Motor neuron (in vitro differentiated cells): ENCODE measurements at regions of chr2 and their contacts with region 1.

Region 1: DNA sequence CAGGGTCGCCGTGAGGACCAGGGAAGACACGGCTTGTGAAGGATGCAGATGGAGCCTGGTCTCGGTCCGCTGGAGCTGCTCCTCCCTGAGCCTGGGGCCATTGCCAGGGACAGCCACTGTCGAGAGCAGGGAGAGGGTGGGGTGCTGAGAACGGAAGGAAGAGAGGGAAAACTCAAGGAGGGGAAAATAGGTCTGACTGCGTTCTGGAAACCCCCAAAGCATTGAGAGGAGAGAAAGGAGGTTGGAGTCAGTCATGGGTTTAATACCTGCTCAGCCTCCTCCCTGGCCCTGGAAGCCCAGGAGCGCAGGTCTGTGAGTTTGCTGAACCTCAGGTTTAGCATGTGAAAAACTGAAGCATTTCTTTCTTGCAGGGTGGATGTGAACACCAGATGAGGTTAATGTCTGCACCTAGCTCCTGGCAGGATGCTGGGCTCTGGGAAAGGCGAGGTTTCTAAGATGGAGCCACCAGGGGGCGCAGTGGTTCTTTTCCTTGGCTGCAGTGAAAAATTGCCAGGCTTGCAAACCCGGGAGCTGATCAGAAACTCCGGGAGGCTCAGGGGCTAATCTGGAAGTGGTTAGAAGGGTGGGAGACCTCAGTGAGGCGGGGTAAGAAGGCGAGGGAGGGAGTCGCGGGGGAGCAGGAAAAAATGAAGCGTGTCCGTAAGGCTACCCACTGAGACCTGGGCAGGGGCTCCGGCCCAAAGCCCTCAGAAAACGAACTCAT is 33.6 kb upstream of the RNF149 start:
- ATAC-seq: peak; percentile 67 to 95 (median 85)
- H3K4me3 ChIP-seq: no peak overlapping the region
- H3K27ac ChIP-seq: no peak overlapping the region
- H3K4me1 ChIP-seq: peaks cover 0 to 4% of the 10 kb centered on the region in 2 donors

Region 2: DNA sequence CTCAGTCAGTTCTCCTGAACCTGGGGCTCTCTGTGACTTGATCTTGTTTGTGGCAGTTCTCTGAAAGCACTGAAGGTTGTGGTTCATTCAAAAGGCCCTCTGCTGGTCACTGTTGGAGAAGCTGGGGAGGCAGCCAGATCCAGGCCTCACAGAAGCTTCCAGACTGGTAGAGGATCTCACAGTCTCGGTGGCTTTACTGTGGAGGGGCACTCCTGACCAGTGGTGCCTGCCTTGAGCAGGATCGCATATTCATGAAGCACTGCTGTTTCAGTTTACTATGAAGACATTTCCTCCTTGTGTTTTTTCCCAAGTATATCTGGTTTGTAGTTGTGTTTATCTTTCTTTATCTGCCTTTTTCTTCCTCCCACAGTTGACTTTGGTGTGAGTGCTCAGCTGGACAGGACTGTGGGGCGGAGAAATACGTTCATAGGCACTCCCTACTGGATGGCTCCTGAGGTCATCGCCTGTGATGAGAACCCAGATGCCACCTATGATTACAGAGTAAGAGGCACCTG is 489.3 kb after region 1 on chr2:
- in situ Hi-C with region 1: loop called in 1 of 9 experiments (anchors 25 kb)
- ATAC-seq: peak; percentile 77 to 95 (median 88)
- H3K4me3 ChIP-seq: no peak overlapping the region
- H3K27ac ChIP-seq: peak overlapping the region in 1 of 2 donors; percentile 42
- H3K4me1 ChIP-seq: peaks cover 16 to 20% of the 10 kb centered on the region in 2 donors